PC-9 (cell line): ENCODE measurements at regions of chr10 and their contacts with region 1.

Region 1: DNA sequence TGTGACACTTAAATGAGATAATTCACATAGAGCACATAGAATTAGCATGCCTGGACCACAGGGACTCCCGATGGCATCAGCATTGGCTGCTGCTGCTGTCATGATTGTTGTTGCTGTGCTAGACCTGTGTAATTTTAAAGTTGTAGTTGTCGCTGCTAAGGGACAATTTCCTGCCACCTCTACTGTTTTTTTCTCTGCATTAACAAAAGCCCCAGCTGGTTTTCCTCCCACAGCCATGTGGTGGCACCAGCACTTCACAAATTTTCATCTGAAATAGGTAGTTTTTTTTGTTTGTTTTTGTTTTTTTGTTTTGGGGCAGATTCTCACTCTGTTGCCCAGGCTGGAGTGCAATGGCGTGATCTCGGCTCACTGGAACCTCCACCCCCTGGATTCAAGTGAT is 25.4 kb upstream of the PRXL2A start:
- DNase-seq: peak; percentile 58 to 60
- H3K4me3 ChIP-seq: no peak overlapping the region
- H3K27ac ChIP-seq: no peak overlapping the region
- H3K4me1 ChIP-seq: no peaks in the 10 kb centered on the region
- H3K27me3 ChIP-seq: no peaks in the 10 kb centered on the region
- CTCF ChIP-seq: peak; percentile 81

Region 2: GRCh38 chr10:80444646-80445319 is 61.8 kb after region 1 on chr10:
- CTCF ChIA-PET with region 1: no interaction called
- POLR2A ChIA-PET with region 1: no interaction called
- intact Hi-C with region 1: loop called (anchors 1 kb)
- DNase-seq: peak; percentile 48 to 60
- H3K4me3 ChIP-seq: no peak overlapping the region
- H3K27ac ChIP-seq: no peak overlapping the region
- H3K4me1 ChIP-seq: peaks cover 23% of the 10 kb centered on the region
- H3K27me3 ChIP-seq: no peaks in the 10 kb centered on the region
- CTCF ChIP-seq: peak; percentile 73

Region 3: DNA sequence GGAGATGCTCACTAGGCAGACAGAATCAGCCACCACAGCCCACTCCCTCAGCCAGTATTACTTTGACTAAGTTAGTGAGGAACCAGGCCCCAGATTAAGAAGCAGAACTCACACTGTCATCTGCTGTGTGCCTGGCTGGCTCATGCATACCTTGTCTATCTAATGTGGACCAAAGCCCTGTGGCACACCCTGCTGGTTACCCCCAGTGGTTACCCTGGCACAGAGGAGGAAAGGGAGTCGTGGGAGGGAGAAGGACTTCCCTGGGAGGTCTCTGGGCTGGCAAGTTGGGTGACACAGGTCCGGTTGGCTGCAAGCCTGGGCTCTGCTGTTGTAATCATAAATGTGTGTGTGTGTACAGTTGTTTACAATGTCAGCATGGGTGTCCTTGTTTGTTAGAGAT is 147.3 kb after region 1 on chr10:
- CTCF ChIA-PET with region 1: no interaction called
- POLR2A ChIA-PET with region 1: no interaction called
- intact Hi-C with region 1: loop called (anchors 1 kb)
- DNase-seq: peak; percentile 62 to 67
- H3K4me3 ChIP-seq: no peak overlapping the region
- H3K27ac ChIP-seq: no peak overlapping the region
- H3K4me1 ChIP-seq: no peaks in the 10 kb centered on the region
- H3K27me3 ChIP-seq: no peaks in the 10 kb centered on the region
- CTCF ChIP-seq: peak; percentile 75

Region 4: GRCh38 chr10:80662577-80663261 is 279.7 kb after region 1 on chr10:
- CTCF ChIA-PET with region 1: no interaction called
- POLR2A ChIA-PET with region 1: no interaction called
- intact Hi-C with region 1: loop called (anchors 2 kb)
- DNase-seq: peak in 1 of 2 experiments; percentile 75
- H3K4me3 ChIP-seq: no peak overlapping the region
- H3K27ac ChIP-seq: no peak overlapping the region
- H3K4me1 ChIP-seq: no peaks in the 10 kb centered on the region
- H3K27me3 ChIP-seq: peaks cover 38% of the 10 kb centered on the region
- CTCF ChIP-seq: peak; percentile 97

Region 5: GRCh38 chr10:80924063-80924952 is 541.3 kb after region 1 on chr10:
- CTCF ChIA-PET with region 1: interaction called, 3 read pairs
- POLR2A ChIA-PET with region 1: no interaction called
- intact Hi-C with region 1: loop called (anchors 1 kb)
- DNase-seq: peak in 1 of 2 experiments; percentile 34
- H3K4me3 ChIP-seq: no peak overlapping the region
- H3K27ac ChIP-seq: no peak overlapping the region
- H3K4me1 ChIP-seq: no peaks in the 10 kb centered on the region
- H3K27me3 ChIP-seq: no peaks in the 10 kb centered on the region
- CTCF ChIP-seq: peak; percentile 85